ENCODE measurements at regions of chr16 and their contacts with region 1.

Region 1: DNA sequence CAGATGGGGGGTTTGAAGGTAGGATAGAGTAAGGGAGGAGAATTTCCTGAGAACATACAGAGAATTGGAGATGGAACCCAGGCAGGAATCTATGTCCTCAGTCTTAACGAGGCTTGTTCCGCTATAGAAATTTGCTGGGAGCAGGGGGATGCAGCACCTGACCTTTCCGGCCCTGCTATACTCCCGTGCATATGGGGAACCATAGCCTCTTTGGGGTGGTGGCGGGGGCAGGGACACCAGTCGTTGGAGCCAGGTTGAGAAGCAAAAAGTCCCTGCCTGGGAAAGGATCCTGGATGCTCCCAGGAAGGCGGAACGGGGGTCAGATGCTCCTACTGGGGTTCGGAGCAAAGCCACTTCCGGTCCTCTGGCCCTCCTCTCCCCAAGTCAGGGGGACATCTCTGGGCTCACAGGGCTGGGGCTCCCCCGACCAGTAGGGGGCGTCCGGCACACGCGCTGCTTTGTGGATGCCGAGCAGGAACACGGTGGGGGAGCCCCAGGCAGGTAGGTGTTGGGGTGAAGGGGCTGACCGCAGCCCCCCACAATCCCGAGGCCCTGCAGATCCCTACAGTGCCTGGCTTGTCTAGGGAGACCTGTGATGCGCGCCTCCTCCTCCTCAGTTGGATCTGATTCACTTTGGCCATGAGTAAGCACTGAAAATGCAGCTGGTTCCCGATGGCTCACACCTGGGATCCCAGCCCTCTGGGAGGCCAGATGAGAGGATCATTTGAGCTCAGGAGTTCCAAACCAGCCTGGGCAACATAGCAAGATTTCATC is 15.5 kb upstream of the TFAP4 start:
- DNase-seq: no peak
- ATAC-seq: peak; percentile 85
- H3K4me3 ChIP-seq: peak overlapping the region in 1 of 2 experiments; percentile 20; a peak in 2 of 4 replicates
- H3K27ac ChIP-seq: no peak overlapping the region; the same call in 1 of the 2 replicates
- H3K4me1 ChIP-seq: peaks cover 48 to 75% of the 10 kb centered on the region in 2 experiments
- H3K27me3 ChIP-seq: no peaks in the 10 kb centered on the region
- CTCF ChIP-seq: peak; percentile 88 to 99 (median 98)
- POLR2A ChIP-seq: no peak
- RAD21 ChIP-seq: peak; percentile 95

Region 2: GRCh38 chr16:4298761-4299522 is 10.6 kb after region 1 on chr16:
- CTCF ChIA-PET with region 1: interaction called, 20 read pairs
- POLR2A ChIA-PET with region 1: interaction called, 6 read pairs
- RAD21 ChIA-PET with region 1: no interaction called
- intact Hi-C with region 1: no loop called
- DNase-seq: peak; percentile 80
- ATAC-seq: peak; percentile 96
- H3K4me3 ChIP-seq: peak overlapping the region; percentile 28 to 44
- H3K27ac ChIP-seq: peak overlapping the region; percentile 99
- H3K4me1 ChIP-seq: peaks cover 38 to 57% of the 10 kb centered on the region in 2 experiments
- H3K27me3 ChIP-seq: no peaks in the 10 kb centered on the region
- CTCF ChIP-seq: no peak
- POLR2A ChIP-seq: no peak
- RAD21 ChIP-seq: no peak

Region 3: DNA sequence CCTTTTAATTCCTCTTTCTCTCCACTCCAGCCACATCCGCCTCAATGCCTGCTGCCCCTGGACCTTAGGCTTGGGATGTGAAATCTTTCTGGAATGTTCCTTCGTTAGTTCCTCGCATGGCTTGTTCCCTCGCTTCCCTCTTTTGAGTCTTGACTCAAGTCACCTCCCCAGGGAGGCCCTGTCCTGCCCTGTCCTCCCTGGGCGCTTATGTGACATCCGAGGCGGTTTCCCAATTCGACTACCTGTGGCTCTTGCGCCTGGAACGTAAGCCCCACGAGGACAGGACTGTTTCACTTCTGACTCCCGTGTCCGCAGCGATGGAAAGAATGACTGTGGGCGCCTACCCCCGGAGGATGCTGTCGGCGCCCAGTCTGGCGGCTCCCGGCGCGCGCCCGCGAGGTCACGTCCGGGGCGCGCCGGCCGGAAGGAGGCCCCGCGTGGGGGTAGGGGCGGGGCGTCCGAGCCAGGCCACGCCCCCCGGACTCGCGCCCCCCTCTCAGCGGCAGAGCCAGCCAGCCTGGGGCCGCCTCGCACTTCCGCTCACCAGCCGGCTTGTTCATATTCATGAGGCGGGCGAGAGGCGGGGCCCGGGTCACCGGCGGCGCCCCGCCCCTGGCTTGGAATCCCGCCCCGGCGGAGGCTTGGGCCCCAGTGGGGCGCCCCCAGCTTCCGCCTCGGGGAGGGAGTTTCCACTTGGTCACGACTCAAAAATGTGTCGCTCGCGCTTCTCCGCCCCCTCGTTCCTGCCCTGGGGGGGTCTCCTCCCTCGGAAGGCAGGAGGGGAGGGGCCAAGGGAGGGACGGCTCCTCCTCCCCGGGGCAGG is 19.1 kb after region 1 on chr16:
- CTCF ChIA-PET with region 1: interaction called, 17 read pairs
- POLR2A ChIA-PET with region 1: no interaction called
- RAD21 ChIA-PET with region 1: interaction called in 1 of 2 experiments, 4 read pairs
- intact Hi-C with region 1: no loop called
- DNase-seq: peak; percentile 92
- ATAC-seq: peak; percentile 89
- H3K4me3 ChIP-seq: peak overlapping the region; percentile 63 to 80
- H3K27ac ChIP-seq: peak overlapping the region; percentile 45
- H3K4me1 ChIP-seq: peaks cover 20 to 44% of the 10 kb centered on the region in 2 experiments
- H3K27me3 ChIP-seq: no peaks in the 10 kb centered on the region
- CTCF ChIP-seq: no peak
- POLR2A ChIP-seq: peak; percentile 27
- RAD21 ChIP-seq: no peak

Region 4: DNA sequence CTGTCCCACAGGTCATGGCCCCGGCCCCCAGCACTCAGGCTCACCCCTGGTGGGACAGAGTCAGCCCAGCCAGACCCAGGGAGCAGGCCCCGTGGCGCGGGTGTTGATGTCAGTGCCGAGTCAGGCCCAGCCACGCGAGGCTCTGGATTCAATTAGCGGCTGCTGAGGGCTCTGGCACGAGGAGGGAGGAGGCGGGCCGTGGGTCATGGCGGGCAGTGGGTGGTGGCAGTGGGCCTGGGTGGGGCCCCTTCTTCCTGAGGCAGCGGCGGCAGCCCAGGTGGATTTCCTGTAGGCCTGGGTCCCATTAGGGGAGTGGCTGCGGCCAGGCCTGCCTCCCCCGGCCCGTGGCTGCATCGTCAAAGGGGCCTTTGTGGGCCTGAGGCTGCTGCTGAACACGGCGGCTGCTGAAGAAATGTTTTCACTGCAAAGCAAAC is 96.2 kb after region 1 on chr16:
- CTCF ChIA-PET with region 1: no interaction called
- POLR2A ChIA-PET with region 1: no interaction called
- RAD21 ChIA-PET with region 1: no interaction called
- intact Hi-C with region 1: no loop called
- DNase-seq: no peak
- ATAC-seq: no peak
- H3K4me3 ChIP-seq: no peak overlapping the region
- H3K27ac ChIP-seq: no peak overlapping the region
- H3K4me1 ChIP-seq: peaks cover 0 to 3% of the 10 kb centered on the region in 2 experiments; a peak in 1 of 4 replicates
- H3K27me3 ChIP-seq: no peaks in the 10 kb centered on the region
- CTCF ChIP-seq: no peak
- POLR2A ChIP-seq: no peak
- RAD21 ChIP-seq: no peak